Heart right ventricle (tissue), 16 donors: ENCODE measurements at regions of chr15 and their contacts with region 1.

Region 1: DNA sequence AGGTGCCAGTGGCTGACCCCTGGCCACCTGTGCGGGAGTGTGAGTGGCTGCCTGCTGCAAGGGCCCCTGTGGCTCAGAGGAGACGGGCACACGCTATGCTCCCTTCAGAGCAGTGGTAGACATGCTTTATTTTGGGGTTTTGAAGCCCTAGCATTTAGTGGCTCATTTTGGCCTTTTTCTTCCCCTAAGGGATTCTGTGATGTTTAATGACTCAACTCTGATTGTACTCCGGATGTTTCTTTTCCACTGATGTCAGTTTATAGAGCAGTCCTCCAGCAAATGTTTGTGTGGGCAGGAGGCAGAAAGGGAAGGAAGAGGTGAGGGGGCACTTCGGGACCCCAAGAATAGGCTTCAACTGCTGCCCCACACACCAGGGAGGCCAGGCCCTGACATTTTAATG is 288.9 kb upstream of the C2CD4B start:
- DNase-seq: no peak
- ATAC-seq: peak in 5 of 8 donors; percentile 7 to 34 (median 18)
- H3K4me3 ChIP-seq: no peak overlapping the region
- H3K27ac ChIP-seq: peak overlapping the region in 9 of 10 donors; percentile 25 to 86 (median 70)
- H3K4me1 ChIP-seq: peaks cover 6 to 74% (median 58%) of the 10 kb centered on the region in 9 donors
- H3K27me3 ChIP-seq: no peaks in the 10 kb centered on the region
- CTCF ChIP-seq: no peak

Region 2: DNA sequence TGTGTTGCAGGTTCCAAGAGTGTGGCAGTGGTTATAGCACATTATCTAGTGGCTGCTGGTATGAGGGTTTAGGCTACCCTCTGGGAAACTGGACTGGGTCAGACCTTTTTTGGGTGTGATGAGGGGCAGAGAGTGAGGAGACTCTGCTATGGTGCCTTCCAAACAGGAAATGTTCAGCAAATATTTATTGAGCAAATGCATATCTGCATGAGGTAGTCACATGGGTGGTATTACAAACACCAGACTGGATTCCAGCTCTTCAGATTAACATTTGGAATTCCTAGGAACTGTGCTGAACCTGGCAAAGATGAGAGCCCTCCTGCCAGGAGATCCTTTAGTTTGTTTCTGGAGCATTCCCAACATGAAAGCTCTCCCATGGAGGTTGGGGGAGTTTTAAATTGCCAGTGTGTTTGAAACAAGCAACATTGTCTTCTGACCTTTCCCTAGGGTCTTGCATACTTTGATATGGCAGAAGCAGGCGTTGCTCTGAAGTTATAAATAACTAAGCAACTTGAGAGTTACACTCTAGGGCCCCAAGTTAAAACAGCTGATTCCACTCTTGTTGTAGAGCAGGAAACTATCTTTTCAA is 52.3 kb after region 1 on chr15:
- intact Hi-C with region 1: loop called in 3 of 10 experiments (anchors 5 to 10 kb)
- DNase-seq: peak in 1 of 2 donors; percentile 27
- ATAC-seq: peak; percentile 56 to 82 (median 76)
- H3K4me3 ChIP-seq: peak overlapping the region in 2 of 10 donors; percentile 1 to 5
- H3K27ac ChIP-seq: peak overlapping the region; percentile 15 to 87 (median 86)
- H3K4me1 ChIP-seq: peaks cover 9 to 85% (median 45%) of the 10 kb centered on the region in 9 donors
- H3K27me3 ChIP-seq: no peaks in the 10 kb centered on the region
- CTCF ChIP-seq: no peak

Region 3: GRCh38 chr15:62649793-62650420 is 195.9 kb after region 1 on chr15:
- intact Hi-C with region 1: loop called in 1 of 10 experiments (anchors 5 kb)
- DNase-seq: peak in 1 of 2 donors; percentile 49
- ATAC-seq: peak in 7 of 8 donors; percentile 21 to 81 (median 74)
- H3K4me3 ChIP-seq: no peak overlapping the region
- H3K27ac ChIP-seq: peak overlapping the region in 7 of 10 donors; percentile 14 to 83 (median 37)
- H3K4me1 ChIP-seq: peaks cover 0 to 32% (median 8%) of the 10 kb centered on the region in 9 donors
- H3K27me3 ChIP-seq: no peaks in the 10 kb centered on the region
- CTCF ChIP-seq: no peak